HEK293 (cell line): ENCODE measurements at regions of chr13 and their contacts with region 1.

Region 1: DNA sequence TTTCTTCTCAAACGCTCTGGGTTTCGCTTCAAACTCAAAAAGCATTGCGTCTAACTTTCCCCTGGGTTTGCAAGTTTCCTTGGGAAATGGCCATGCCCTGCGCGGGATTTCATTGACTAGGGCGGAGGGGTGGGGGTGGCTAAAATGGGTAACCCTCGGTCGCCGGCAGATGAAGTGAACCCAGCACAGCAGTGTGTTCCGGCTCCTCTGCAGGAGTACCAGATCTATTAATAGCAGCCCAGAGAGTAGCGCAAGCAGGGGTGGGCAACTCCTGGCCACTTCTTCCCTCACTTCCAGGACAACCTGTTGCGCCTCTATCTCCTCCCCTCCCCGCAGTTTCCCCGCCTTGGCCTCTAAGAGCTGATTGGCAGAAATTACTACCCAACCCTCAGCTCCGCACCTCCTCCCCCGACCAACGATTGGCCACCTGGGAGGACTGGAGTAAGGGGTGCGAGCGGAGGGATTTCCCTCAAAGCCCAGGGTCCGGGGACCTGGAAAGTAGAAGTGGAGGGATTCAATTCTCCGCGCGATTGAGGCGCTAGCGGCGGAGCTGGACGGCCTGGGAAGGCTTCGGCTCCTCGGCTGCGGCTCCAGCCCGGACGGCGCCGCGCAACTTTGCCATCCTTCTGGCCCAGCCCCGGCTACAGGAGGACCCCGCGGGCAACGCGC is at the start of gene FREM2:
- H3K4me3 ChIP-seq: peak within 1 kb of the TSS; percentile 61
- H3K27ac ChIP-seq: peak within 1 kb of the TSS; percentile 79
- H3K4me1 ChIP-seq: peaks cover 4% of the 10 kb centered on the region
- CTCF ChIP-seq: no peak

Region 2: GRCh38 chr13:38582133-38582532 is 104.6 kb before region 1 on chr13:
- CTCF ChIA-PET with region 1: no interaction called
- POLR2A ChIA-PET with region 1: no interaction called
- H3K4me3 ChIP-seq: no peak overlapping the region
- H3K27ac ChIP-seq: no peak overlapping the region
- H3K4me1 ChIP-seq: no peaks in the 10 kb centered on the region
- CTCF ChIP-seq: no peak

Region 3: GRCh38 chr13:38670627-38671026 is 16.1 kb before region 1 on chr13:
- CTCF ChIA-PET with region 1: interaction called, 10 read pairs
- POLR2A ChIA-PET with region 1: interaction called, 5 read pairs
- H3K4me3 ChIP-seq: no peak overlapping the region
- H3K27ac ChIP-seq: no peak overlapping the region
- H3K4me1 ChIP-seq: no peaks in the 10 kb centered on the region
- CTCF ChIP-seq: no peak

Region 4: GRCh38 chr13:38697628-38698333 is 11.1 kb after region 1 on chr13:
- CTCF ChIA-PET with region 1: no interaction called
- POLR2A ChIA-PET with region 1: no interaction called
- H3K4me3 ChIP-seq: no peak overlapping the region
- H3K27ac ChIP-seq: no peak overlapping the region
- H3K4me1 ChIP-seq: no peaks in the 10 kb centered on the region
- CTCF ChIP-seq: no peak

Region 5: DNA sequence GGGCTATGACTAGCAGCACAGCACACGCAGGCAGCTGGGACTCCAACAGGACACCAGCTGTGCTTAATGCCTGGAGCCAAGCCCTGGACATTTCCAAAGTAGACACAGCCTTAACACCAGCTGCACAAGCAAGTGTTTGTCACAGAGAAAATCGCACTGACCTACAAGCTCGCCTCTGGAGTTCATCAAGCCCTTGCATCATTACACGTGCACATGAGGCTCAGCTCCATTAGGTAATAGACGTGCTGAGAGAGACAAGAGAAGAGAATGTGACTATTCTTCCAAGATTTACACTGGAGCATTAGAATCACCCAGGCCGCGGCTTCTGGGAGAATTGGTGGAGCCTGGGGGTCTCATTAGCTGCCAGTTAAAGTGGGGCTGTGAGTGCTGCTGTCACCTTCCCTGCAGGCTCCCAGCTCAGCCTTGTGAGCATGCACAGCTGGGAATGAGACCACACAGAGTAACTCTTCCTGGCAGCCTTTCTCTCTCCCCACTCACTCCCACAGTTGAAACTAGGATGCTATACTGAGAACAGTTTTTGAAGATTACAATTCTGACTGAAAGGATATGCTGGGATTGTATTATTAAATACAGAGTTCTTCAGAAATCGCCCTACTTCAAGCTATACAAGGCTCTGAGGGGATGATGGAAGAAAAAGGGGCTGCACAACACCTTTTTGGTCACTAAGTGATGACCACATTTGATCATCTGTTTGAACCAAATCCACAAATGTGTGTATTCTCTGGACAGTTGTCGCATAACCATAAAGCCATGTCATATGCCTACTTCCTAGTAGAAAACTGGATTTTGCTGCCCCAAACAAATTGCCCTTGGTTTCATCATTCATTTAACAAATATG is 293.4 kb after region 1 on chr13:
- CTCF ChIA-PET with region 1: no interaction called
- POLR2A ChIA-PET with region 1: no interaction called
- H3K4me3 ChIP-seq: no peak overlapping the region
- H3K27ac ChIP-seq: no peak overlapping the region
- H3K4me1 ChIP-seq: no peaks in the 10 kb centered on the region
- CTCF ChIP-seq: no peak